CD8-positive, alpha-beta memory T cell (primary cell): ENCODE measurements at regions of chr11 and their contacts with region 1.

Region 1: GRCh38 chr11:77082838-77083562 is 16.2 kb downstream of the CAPN5 start:
- DNase-seq: peak in 3 of 5 donors; percentile 30 to 66 (median 62)
- H3K4me3 ChIP-seq: peak overlapping the region; percentile 36
- H3K4me3 Mint-ChIP-seq: peak overlapping the region in 6 of 7 donors; percentile 71 to 83 (median 77)
- H3K27ac ChIP-seq: no peak overlapping the region
- H3K27ac Mint-ChIP-seq: peak overlapping the region in 7 of 8 donors; percentile 91 to 97 (median 94)
- H3K4me1 ChIP-seq: peaks cover 19% of the 10 kb centered on the region
- H3K4me1 Mint-ChIP-seq: peaks cover 13 to 18% (median 18%) of the 10 kb centered on the region in 3 donors
- H3K27me3 ChIP-seq: no peaks in the 10 kb centered on the region
- H3K27me3 Mint-ChIP-seq: peaks cover 0 to 1% of the 10 kb centered on the region in 2 donors

Region 2: DNA sequence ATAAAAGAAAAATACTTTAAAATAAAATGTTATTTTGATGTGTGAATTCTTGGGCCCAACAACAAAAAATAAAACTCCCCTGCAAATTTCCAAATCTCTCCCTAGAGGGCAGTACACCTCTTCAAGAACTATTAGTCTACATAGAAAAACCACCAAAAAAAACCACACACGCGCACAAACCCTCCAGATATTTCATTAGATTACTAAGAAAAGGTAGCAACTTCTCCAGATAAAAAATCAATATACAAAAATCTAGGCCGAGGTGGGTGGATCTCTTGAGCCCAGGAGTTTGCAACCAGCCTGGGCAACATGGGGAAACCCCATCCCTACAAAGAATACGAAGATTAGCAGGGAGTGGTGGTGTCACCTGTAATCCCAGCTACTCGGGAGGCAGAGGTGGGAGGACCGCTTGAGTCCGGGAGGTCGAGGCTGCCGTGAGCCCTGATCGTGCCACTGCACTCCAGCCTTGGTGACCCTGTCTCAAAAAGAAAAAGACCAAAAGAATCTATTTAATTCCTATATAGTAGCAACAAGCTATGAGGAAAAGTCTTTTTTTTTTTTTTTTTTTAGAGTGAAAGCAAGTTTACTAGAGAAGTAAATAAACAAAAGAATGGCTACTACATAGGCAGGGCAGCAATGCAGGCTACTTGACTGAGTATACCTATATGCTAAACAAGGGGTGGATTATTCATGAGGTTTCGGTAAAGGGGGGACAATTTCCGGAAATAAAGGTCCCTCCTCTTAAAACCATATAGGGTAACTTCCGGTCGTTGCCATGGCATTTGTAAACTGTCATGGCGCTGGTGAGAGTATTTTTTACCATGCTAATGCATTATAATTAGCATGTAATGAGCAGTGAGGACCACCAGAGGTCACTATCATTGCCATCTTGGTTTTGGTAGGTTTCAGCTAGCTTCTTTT is 35.7 kb before region 1 on chr11:
- CTCF ChIA-PET with region 1: interaction called, 10 read pairs
- POLR2A ChIA-PET with region 1: interaction called, 6 read pairs
- DNase-seq: peak; percentile 59 to 92 (median 89)
- H3K4me3 ChIP-seq: peak overlapping the region; percentile 58
- H3K4me3 Mint-ChIP-seq: peak overlapping the region; percentile 57 to 73 (median 69)
- H3K27ac ChIP-seq: peak overlapping the region; percentile 25
- H3K27ac Mint-ChIP-seq: peak overlapping the region; percentile 9 to 89 (median 70)
- H3K4me1 ChIP-seq: peaks cover 15% of the 10 kb centered on the region
- H3K4me1 Mint-ChIP-seq: peaks cover 8 to 12% (median 10%) of the 10 kb centered on the region in 3 donors
- H3K27me3 ChIP-seq: peaks cover 5% of the 10 kb centered on the region
- H3K27me3 Mint-ChIP-seq: peaks cover 23 to 24% of the 10 kb centered on the region in 2 donors